IMR-90 (cell line): ENCODE measurements at regions of chr17 and their contacts with region 1.

Region 1: GRCh38 chr17:76791053-76791980 is 53.4 kb downstream of the MFSD11 start:
- DNase-seq: peak; percentile 38
- ATAC-seq: peak; percentile 57
- H3K4me3 ChIP-seq: no peak overlapping the region
- H3K27ac ChIP-seq: no peak overlapping the region
- H3K4me1 ChIP-seq: peaks cover 2% of the 10 kb centered on the region; the same call in 1 of the 2 replicates
- H3K27me3 ChIP-seq: no peaks in the 10 kb centered on the region
- CTCF ChIP-seq: no peak
- POLR2A ChIP-seq: no peak
- RAD21 ChIP-seq: no peak

Region 2: GRCh38 chr17:75515496-75516254 is 1275.6 kb before region 1 on chr17 and contains the start of gene CASKIN2:
- CTCF ChIA-PET with region 1: no interaction called
- POLR2A ChIA-PET with region 1: interaction called, 13 read pairs
- dilution Hi-C with region 1: no loop called
- in situ Hi-C with region 1: no loop called
- intact Hi-C with region 1: no loop called
- DNase-seq: peak; percentile 86
- ATAC-seq: peak; percentile 79
- H3K4me3 ChIP-seq: peak within 1 kb of the TSS; percentile 82
- H3K27ac ChIP-seq: peak within 1 kb of the TSS; percentile 51
- H3K4me1 ChIP-seq: peaks cover 10% of the 10 kb centered on the region; the same call in 1 of the 2 replicates
- H3K27me3 ChIP-seq: no peaks in the 10 kb centered on the region
- CTCF ChIP-seq: peak; percentile 100
- POLR2A ChIP-seq: no peak
- RAD21 ChIP-seq: peak; percentile 82
- total RNA-seq, gene CASKIN2: 2.2 and 2.9 TPM in 2 replicates

Region 3: DNA sequence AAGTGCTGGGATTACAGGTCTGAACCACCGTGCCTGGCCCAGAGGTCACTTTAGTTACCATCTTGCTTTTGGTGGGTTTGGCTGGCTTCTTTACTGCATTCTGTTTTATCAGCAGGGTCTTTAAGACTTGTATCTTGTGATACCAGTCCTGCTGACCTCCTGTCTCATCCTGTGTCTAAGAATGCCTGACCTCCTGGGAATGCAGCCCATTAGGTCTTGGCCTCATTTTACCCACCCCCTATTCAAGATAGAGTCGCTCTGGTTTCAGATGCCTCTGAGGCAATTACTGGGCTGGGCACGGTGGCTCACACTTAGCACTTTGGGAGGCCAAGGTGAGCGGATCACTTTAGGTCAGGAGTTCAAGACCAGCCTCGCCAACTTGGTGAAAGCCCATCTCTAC is 10.4 kb after region 1 on chr17:
- CTCF ChIA-PET with region 1: interaction called, 3 read pairs
- POLR2A ChIA-PET with region 1: interaction called, 10 read pairs
- dilution Hi-C with region 1: no loop called
- in situ Hi-C with region 1: no loop called
- intact Hi-C with region 1: no loop called
- DNase-seq: no peak
- ATAC-seq: no peak
- H3K4me3 ChIP-seq: no peak overlapping the region
- H3K27ac ChIP-seq: no peak overlapping the region
- H3K4me1 ChIP-seq: no peaks in the 10 kb centered on the region
- H3K27me3 ChIP-seq: no peaks in the 10 kb centered on the region; the same call in 1 of the 2 replicates
- CTCF ChIP-seq: no peak
- POLR2A ChIP-seq: no peak
- RAD21 ChIP-seq: no peak

Region 4: GRCh38 chr17:76820039-76820438 is 28.7 kb after region 1 on chr17:
- CTCF ChIA-PET with region 1: no interaction called
- POLR2A ChIA-PET with region 1: no interaction called
- dilution Hi-C with region 1: no loop called
- in situ Hi-C with region 1: no loop called
- intact Hi-C with region 1: no loop called
- DNase-seq: no peak
- ATAC-seq: no peak
- H3K4me3 ChIP-seq: no peak overlapping the region
- H3K27ac ChIP-seq: no peak overlapping the region
- H3K4me1 ChIP-seq: no peaks in the 10 kb centered on the region
- H3K27me3 ChIP-seq: peaks cover 21% of the 10 kb centered on the region
- CTCF ChIP-seq: no peak
- POLR2A ChIP-seq: no peak
- RAD21 ChIP-seq: no peak